PC-9 (cell line): ENCODE measurements at regions of chr1 and their contacts with region 1.

Region 1: DNA sequence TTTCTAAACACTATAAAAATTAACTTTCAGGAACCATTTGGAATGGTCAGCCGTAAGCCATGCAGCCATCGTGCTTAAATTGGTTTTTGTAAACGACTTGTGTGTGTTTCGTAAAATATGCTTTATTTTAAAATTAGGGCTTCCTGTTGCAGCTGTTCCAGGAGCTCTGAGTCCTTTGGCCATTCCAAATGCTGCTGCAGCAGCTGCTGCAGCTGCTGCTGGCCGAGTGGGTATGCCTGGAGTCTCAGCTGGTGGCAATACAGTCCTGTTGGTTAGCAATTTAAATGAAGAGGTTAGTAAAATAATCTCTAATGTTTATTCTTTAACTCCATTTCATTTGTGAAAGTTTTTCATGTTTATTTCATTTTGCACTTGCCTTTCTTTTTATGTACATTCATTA is 83.1 kb downstream of the PTBP2 start:
- DNase-seq: no peak
- H3K4me3 ChIP-seq: no peak overlapping the region
- H3K27ac ChIP-seq: no peak overlapping the region
- H3K4me1 ChIP-seq: no peaks in the 10 kb centered on the region
- H3K27me3 ChIP-seq: no peaks in the 10 kb centered on the region
- CTCF ChIP-seq: no peak

Region 2: DNA sequence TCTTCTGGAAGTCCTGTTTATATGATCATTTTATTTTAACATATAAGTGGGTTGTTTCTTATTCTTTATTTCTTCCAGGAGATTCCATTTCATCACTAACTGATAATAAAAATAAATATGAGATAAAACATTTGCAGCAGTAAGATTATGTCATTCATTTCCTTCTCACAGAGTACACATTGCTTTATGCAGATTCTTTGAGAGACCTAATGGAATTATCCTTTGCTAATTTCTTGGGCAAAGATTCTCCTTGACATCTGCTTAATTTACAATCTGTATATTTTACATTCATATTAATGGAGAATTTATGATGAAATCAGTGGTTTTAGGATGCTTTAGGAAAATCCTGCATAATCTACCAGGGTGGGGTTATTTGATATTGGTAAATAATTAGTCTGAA is 22.4 kb before region 1 on chr1:
- CTCF ChIA-PET with region 1: no interaction called
- POLR2A ChIA-PET with region 1: no interaction called
- intact Hi-C with region 1: no loop called
- DNase-seq: no peak
- H3K4me3 ChIP-seq: no peak overlapping the region
- H3K27ac ChIP-seq: no peak overlapping the region
- H3K4me1 ChIP-seq: no peaks in the 10 kb centered on the region
- H3K27me3 ChIP-seq: no peaks in the 10 kb centered on the region
- CTCF ChIP-seq: no peak

Region 3: DNA sequence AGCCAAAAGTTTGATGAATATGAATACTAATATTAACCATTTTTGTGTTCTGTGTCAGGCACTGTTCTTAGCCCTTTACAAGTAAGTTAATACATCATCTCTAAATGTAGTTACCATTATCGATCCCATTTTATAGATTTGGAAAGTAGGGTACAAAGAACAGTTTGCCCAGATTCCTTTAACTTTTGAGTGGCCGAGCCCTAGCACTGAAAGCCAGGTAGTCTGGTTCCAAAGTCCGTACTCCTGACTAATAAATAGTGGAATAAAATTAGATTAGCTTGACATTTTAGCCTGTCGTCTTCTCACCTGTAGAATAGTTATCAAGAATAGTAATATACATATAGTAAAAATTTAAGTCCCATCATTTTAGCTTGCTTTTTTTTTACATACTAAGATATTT is 12.4 kb before region 1 on chr1:
- CTCF ChIA-PET with region 1: interaction called, 16 read pairs
- POLR2A ChIA-PET with region 1: no interaction called
- intact Hi-C with region 1: no loop called
- DNase-seq: no peak
- H3K4me3 ChIP-seq: no peak overlapping the region
- H3K27ac ChIP-seq: no peak overlapping the region
- H3K4me1 ChIP-seq: no peaks in the 10 kb centered on the region
- H3K27me3 ChIP-seq: no peaks in the 10 kb centered on the region
- CTCF ChIP-seq: no peak

Region 4: DNA sequence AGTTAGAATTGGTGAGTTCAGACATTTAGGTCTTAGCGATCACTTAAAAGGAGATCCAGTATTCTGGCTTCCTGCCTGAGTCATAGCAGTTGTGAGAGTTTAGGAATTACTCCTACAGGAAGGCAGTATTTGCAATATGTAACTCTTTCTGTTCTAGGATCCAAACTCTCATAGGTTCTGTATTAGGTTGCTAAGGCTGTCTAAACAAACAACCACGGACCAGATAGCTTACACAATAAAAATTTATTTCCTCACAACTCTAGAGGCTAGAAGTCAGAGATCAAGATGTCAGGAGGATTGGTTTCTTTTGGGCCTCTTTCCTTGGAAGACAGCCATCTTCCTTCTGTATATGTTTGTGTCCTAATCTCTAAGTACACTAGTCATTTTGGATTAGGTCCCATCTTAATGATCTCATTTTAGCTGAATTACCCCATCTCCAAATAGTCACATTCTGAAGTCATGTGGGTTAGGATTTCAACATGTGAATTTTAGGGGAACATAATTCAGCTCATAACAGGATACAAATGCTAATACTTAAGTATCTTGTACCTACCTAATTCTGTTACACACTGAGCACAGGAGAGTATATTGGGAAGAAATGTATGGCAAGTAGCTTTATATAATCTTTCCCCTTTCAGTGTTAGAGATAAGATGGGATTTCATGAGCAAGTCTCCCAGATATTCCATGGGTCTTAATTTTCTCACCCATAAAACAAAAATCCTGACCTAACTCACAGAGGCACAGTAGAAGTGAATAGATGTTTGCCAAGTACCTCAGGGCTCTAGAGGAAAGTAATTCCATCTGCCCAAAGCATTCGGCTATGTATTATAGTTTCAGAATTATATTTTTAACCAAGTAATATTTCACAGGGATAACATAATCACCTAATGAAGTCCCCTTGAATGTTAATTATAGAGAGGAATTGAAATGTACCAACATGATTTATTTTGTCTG is 61.4 kb after region 1 on chr1:
- CTCF ChIA-PET with region 1: no interaction called
- POLR2A ChIA-PET with region 1: no interaction called
- intact Hi-C with region 1: no loop called
- DNase-seq: peak in 1 of 2 experiments; percentile 58
- H3K4me3 ChIP-seq: no peak overlapping the region
- H3K27ac ChIP-seq: no peak overlapping the region
- H3K4me1 ChIP-seq: no peaks in the 10 kb centered on the region
- H3K27me3 ChIP-seq: no peaks in the 10 kb centered on the region
- CTCF ChIP-seq: no peak

Region 5: DNA sequence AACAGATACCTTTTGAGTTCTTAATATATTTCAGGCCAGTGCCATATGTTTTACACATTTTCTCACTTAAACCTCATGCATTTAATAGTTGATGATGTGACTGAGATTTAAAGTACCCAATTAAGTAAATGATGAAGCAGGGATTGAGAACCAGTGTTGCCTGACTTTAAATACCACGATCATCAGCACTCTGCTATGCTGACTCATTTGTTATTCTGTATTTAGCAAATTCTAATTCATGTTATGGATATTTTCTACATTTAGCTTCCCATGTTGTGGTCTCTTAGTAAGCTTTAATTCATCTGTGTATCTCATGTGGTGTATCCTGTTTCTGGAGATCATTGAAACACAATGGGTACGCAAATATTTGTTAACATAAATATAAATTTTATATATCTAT is 279.9 kb after region 1 on chr1:
- CTCF ChIA-PET with region 1: no interaction called
- POLR2A ChIA-PET with region 1: no interaction called
- intact Hi-C with region 1: no loop called
- DNase-seq: no peak
- H3K4me3 ChIP-seq: no peak overlapping the region
- H3K27ac ChIP-seq: no peak overlapping the region
- H3K4me1 ChIP-seq: no peaks in the 10 kb centered on the region
- H3K27me3 ChIP-seq: no peaks in the 10 kb centered on the region
- CTCF ChIP-seq: no peak